Tibial artery (tissue), 4 donors: ENCODE measurements at regions of chr6 and their contacts with region 1.

Region 1: DNA sequence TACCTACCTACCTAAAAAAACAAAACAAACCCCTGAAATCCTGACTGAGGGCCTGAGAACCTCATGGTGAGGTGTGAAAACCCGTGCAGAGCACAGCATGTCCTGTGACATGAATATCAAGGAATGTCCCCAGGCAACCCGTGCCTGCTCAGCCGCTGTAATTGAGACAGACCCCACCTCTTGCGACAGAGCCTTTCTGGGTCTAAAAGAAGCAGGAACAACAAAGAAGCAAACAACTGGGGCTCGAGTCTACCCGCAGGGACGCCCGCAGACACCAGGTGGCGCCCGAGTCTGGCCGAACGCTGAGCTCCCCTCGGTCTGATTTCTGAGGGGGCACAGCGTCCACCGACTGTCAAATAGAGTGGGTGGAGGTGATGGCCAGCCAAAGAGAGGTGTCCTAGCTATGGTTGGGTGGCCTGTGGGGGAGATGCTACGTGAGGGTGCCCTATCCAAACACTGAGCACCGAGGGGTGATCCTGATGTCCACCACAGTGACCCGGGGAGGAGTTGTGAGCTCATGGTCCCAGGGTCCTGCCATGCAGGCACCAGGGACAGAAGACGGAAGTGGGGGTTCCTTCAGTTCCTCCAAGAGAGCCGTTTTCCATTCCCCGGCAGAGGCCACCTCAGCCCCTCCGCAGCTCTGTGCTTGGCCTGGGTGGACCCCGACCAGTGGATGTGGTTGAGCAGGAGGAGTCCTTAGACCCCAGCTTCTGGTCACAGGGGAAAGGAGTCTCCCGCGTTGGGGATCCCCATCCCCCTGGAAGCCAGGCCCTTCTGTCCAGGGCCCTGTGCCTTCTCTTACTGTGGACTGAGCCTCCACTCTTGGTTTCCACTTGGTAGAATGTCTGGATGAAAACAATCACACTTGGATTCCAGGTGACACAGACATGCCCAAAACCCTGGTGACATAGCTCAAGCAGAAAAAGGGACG is 268.2 kb downstream of the CDC5L start:
- DNase-seq: peak; percentile 89 to 94
- H3K4me3 ChIP-seq: no peak overlapping the region
- H3K27ac ChIP-seq: peak overlapping the region in 1 of 2 donors; percentile 23
- H3K4me1 ChIP-seq: peaks cover 0 to 21% (median 10%) of the 10 kb centered on the region in 4 donors
- H3K27me3 ChIP-seq: peaks cover 0 to 10% of the 10 kb centered on the region in 2 donors
- CTCF ChIP-seq: peak; percentile 88 to 90

Region 2: GRCh38 chr6:44475779-44476434 is 179.8 kb before region 1 on chr6:
- intact Hi-C with region 1: loop called (anchors 5 kb)
- DNase-seq: peak; percentile 72 to 82
- H3K4me3 ChIP-seq: no peak overlapping the region
- H3K27ac ChIP-seq: no peak overlapping the region
- H3K4me1 ChIP-seq: peaks cover 0 to 7% (median 5%) of the 10 kb centered on the region in 4 donors
- H3K27me3 ChIP-seq: peaks cover 0 to 7% of the 10 kb centered on the region in 2 donors
- CTCF ChIP-seq: peak; percentile 91 to 97

Region 3: GRCh38 chr6:45714741-45715507 is 1059.2 kb after region 1 on chr6:
- intact Hi-C with region 1: loop called (anchors 5 kb)
- DNase-seq: peak in 1 of 2 donors; percentile 43
- H3K4me3 ChIP-seq: peak overlapping the region in 1 of 2 donors; percentile 26
- H3K27ac ChIP-seq: no peak overlapping the region
- H3K4me1 ChIP-seq: peaks cover 0 to 5% (median 2%) of the 10 kb centered on the region in 4 donors
- H3K27me3 ChIP-seq: peaks cover 0 to 9% of the 10 kb centered on the region in 2 donors
- CTCF ChIP-seq: peak; percentile 73 to 80

Region 4: GRCh38 chr6:45922728-45923351 is 1267.2 kb after region 1 on chr6:
- intact Hi-C with region 1: loop called (anchors 10 kb)
- DNase-seq: peak; percentile 72 to 74
- H3K4me3 ChIP-seq: no peak overlapping the region
- H3K27ac ChIP-seq: no peak overlapping the region
- H3K4me1 ChIP-seq: no peaks in the 10 kb centered on the region
- H3K27me3 ChIP-seq: peaks cover 0 to 7% of the 10 kb centered on the region in 2 donors
- CTCF ChIP-seq: peak; percentile 41 to 48